Mammary epithelial cell (primary cell): ENCODE measurements at regions of chr10 and their contacts with region 1.

Region 1: DNA sequence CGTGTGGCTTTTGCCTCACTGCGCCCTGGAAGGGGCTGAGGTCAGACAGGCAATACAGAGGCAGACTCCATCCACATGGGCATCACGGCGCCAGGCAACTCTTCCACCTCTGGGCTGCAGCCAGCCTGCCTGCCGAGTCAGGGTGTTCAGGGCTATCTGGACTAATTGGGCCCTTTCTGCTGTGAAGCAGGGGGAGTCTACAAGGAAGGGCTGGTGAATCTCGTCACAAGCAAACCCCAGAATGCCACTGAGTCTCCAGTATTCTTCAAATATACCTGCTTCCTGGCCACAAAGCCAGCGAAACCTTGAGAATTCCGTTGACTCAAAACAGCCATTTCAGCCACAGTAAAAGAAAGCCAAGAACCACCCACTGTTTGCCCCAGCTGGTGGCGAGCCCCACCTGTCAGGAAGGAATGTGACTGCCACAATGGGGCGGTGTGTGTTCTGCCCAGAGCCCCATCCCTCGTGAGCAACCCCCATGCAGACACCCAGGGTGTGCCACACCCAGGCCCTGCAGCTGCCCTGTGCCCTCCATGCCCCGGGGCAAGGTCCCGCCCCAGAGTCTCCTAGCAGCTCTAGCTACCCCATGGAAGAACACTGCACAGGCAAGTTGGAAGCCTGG is 117.3 kb downstream of the FAM53B start:
- DNase-seq: peak; percentile 82
- H3K4me3 ChIP-seq: no peak overlapping the region
- H3K27ac ChIP-seq: peak overlapping the region; percentile 57
- H3K4me1 ChIP-seq: peaks cover 49% of the 10 kb centered on the region
- H3K27me3 ChIP-seq: no peaks in the 10 kb centered on the region
- CTCF ChIP-seq: peak in 1 of 2 donors; percentile 25

Region 2: DNA sequence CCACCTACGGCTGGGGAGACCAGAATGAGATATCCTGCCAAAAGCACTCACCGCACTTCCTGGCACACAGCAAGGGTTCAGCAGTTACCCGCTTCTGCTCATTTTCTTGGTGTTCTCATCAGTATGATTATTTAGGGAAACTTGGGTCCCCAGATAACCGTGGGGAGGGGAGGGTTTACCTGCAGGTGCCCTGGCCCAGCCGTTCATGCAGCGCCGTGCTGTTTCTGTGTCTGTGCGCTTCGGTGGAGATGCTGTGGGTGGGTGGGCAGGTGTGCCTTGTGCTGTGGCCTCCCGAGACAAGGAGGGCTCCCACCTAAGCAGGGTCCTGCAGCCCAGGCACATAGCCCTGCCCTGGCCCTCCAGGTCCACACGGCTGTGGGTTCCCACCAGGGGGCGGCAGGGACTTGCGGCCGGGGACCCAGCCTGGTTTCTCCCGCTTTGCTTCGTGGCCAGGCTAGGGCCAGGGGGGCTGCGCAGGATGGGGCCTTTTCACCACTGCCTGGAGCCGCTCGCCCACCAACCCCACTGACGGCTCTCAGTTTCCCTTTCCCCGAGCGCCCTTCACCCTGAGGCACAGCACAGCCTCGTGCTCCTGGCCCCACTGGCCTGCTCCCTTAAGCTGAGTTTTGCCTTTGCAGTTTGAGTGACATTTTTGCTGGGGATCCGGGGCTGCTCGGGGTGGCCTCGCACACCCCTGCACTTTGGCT is 86.8 kb before region 1 on chr10:
- CTCF ChIA-PET with region 1: no interaction called
- dilution Hi-C with region 1: no loop called
- in situ Hi-C with region 1: no loop called
- intact Hi-C with region 1: loop called (anchors 5 kb)
- DNase-seq: no peak
- H3K4me3 ChIP-seq: no peak overlapping the region
- H3K27ac ChIP-seq: no peak overlapping the region
- H3K4me1 ChIP-seq: peaks cover 7% of the 10 kb centered on the region
- H3K27me3 ChIP-seq: no peaks in the 10 kb centered on the region
- CTCF ChIP-seq: peak; percentile 25 to 56